Activated CD4-positive, alpha-beta T cell treated with anti-CD3 and anti-CD28 coated beads for 36 hours (primary cell): ENCODE measurements at regions of chr2 and their contacts with region 1.

Region 1: DNA sequence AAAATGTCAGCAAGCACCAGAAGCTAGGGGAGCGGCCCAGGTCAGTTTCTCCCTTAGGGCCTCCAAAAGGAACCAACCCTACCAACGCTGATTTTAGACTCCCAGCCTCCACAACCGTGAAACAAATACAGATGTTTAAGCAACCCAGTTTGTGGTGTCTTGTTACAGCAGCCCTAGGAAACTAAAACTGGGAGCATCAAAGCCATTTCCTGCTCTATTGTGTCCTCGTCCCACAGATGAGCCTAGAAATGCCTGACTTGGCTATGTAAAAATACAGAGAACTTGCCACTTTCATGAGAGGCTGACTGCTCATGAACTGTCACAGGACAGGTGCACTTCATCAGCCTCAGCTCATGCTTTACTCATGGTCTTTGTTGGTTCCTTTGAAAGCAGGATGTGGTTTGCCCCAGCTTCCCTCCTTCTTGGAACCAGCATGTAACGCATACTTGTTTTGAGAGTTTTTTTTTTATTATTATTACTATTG is 97.6 kb upstream of the SLC39A10 start:
- DNase-seq: peak; percentile 88
- ATAC-seq: peak; percentile 72
- H3K4me3 Mint-ChIP-seq: peak overlapping the region; percentile 33
- H3K27ac Mint-ChIP-seq: peak overlapping the region; percentile 97
- H3K4me1 Mint-ChIP-seq: peaks cover 67% of the 10 kb centered on the region
- H3K27me3 Mint-ChIP-seq: no peaks in the 10 kb centered on the region

Region 2: GRCh38 chr2:195364015-195364965 is 195.2 kb before region 1 on chr2:
- CTCF ChIA-PET with region 1: no interaction called
- POLR2A ChIA-PET with region 1: interaction called, 4 read pairs
- intact Hi-C with region 1: loop called in 1 of 2 experiments (anchors 5 kb)
- DNase-seq: peak; percentile 17
- ATAC-seq: peak; percentile 70
- H3K4me3 Mint-ChIP-seq: no peak overlapping the region
- H3K27ac Mint-ChIP-seq: peak overlapping the region; percentile 68
- H3K4me1 Mint-ChIP-seq: peaks cover 31% of the 10 kb centered on the region
- H3K27me3 Mint-ChIP-seq: no peaks in the 10 kb centered on the region

Region 3: GRCh38 chr2:195533771-195534642 is 25.5 kb before region 1 on chr2:
- CTCF ChIA-PET with region 1: interaction called, 12 read pairs
- POLR2A ChIA-PET with region 1: interaction called, 44 read pairs
- intact Hi-C with region 1: loop called (anchors 1 kb)
- DNase-seq: peak; percentile 86
- ATAC-seq: peak; percentile 75
- H3K4me3 Mint-ChIP-seq: peak overlapping the region; percentile 78
- H3K27ac Mint-ChIP-seq: peak overlapping the region; percentile 100
- H3K4me1 Mint-ChIP-seq: peaks cover 82% of the 10 kb centered on the region
- H3K27me3 Mint-ChIP-seq: no peaks in the 10 kb centered on the region

Region 4: DNA sequence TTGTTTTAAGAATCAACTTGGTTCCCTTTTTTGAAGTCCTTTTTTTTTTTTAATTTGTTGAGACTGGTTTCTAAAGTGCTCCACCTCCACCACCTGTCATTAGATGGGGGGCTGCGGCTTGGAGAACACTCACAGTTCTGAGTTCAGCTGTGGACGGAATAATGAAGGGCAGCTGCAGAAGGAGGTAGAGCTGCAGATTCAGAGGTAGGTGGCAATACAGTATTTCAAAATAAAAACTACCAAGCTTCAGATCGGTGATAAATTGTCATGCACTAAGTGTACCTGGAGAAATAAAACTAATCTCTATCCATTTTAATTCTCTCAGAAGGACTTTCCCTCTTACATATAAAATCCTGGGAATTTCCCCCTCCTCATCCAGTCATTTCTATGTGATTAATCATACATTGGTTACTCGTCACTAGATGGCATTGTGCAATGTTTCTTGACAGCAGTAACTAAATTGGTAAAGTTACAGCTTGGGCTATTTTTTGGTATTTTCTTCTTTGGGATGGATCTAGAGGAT is 16.5 kb after region 1 on chr2:
- CTCF ChIA-PET with region 1: interaction called, 4 read pairs
- POLR2A ChIA-PET with region 1: interaction called, 5 read pairs
- intact Hi-C with region 1: loop called in 1 of 2 experiments (anchors 1 kb)
- DNase-seq: no peak
- ATAC-seq: peak; percentile 75
- H3K4me3 Mint-ChIP-seq: peak overlapping the region; percentile 33
- H3K27ac Mint-ChIP-seq: peak overlapping the region; percentile 67
- H3K4me1 Mint-ChIP-seq: peaks cover 71% of the 10 kb centered on the region
- H3K27me3 Mint-ChIP-seq: no peaks in the 10 kb centered on the region

Region 5: GRCh38 chr2:195937176-195937575 is 377.7 kb after region 1 on chr2:
- CTCF ChIA-PET with region 1: no interaction called
- POLR2A ChIA-PET with region 1: no interaction called
- intact Hi-C with region 1: no loop called
- DNase-seq: no peak
- ATAC-seq: no peak
- H3K4me3 Mint-ChIP-seq: no peak overlapping the region
- H3K27ac Mint-ChIP-seq: no peak overlapping the region
- H3K4me1 Mint-ChIP-seq: no peaks in the 10 kb centered on the region
- H3K27me3 Mint-ChIP-seq: peaks cover 2% of the 10 kb centered on the region

Region 6: GRCh38 chr2:196160101-196160500 is 600.6 kb after region 1 on chr2:
- CTCF ChIA-PET with region 1: no interaction called
- POLR2A ChIA-PET with region 1: no interaction called
- intact Hi-C with region 1: loop called in 1 of 2 experiments (anchors 10 kb)
- DNase-seq: peak; percentile 73
- ATAC-seq: peak; percentile 45
- H3K4me3 Mint-ChIP-seq: peak overlapping the region; percentile 56
- H3K27ac Mint-ChIP-seq: peak overlapping the region; percentile 90
- H3K4me1 Mint-ChIP-seq: peaks cover 76% of the 10 kb centered on the region
- H3K27me3 Mint-ChIP-seq: no peaks in the 10 kb centered on the region

Region 7: DNA sequence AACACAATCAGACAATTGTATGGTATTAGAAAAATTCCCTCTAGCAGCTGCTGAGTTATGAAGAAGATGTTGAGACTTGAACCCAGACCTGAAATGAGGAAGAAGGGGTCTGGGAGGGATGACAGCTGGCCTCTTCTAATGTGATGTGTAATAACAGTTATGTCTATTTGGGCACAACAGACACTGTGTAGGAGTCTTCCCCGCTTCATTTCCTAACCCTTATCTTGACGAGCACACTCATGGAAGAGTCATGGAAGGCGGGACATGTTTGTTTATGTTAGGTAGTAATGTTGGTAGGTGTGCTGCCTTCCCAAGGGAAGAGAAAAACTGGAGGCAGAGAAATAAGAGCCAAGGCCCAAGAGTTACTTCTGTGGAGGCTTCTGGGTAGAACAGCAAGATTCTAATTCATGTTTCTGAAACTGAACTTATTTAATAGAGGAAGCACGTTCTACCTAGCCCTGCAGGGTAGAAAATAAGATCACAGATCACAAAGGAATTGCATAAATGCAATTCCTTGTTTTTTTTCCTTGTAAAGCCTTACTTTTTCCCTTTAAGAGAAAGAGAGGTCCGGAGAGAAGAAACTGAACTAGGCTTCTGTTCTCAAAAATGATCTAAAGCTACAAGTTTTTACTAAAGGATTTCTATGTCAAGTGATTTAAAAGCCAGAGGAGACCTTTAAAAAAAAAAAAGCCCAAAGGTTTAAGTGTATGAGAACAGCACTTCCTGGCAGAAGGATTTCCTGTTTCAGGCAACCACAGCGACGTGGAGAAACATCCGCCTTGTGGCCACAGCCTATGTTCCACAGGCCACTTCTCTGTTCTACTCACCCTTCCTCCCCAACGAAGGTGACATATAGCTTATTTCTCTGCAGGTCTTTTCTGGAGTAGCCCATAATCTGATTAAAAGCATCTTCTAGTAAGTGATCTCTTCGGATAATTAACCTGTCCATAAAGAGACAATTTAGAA is 680.4 kb after region 1 on chr2:
- CTCF ChIA-PET with region 1: interaction called, 3 read pairs
- POLR2A ChIA-PET with region 1: no interaction called
- intact Hi-C with region 1: loop called in 1 of 2 experiments (anchors 5 kb)
- DNase-seq: peak; percentile 91
- ATAC-seq: peak; percentile 58
- H3K4me3 Mint-ChIP-seq: peak overlapping the region; percentile 46
- H3K27ac Mint-ChIP-seq: peak overlapping the region; percentile 97
- H3K4me1 Mint-ChIP-seq: peaks cover 91% of the 10 kb centered on the region
- H3K27me3 Mint-ChIP-seq: no peaks in the 10 kb centered on the region